ENCODE measurements at regions of chr6 and their contacts with region 1.

Region 1: DNA sequence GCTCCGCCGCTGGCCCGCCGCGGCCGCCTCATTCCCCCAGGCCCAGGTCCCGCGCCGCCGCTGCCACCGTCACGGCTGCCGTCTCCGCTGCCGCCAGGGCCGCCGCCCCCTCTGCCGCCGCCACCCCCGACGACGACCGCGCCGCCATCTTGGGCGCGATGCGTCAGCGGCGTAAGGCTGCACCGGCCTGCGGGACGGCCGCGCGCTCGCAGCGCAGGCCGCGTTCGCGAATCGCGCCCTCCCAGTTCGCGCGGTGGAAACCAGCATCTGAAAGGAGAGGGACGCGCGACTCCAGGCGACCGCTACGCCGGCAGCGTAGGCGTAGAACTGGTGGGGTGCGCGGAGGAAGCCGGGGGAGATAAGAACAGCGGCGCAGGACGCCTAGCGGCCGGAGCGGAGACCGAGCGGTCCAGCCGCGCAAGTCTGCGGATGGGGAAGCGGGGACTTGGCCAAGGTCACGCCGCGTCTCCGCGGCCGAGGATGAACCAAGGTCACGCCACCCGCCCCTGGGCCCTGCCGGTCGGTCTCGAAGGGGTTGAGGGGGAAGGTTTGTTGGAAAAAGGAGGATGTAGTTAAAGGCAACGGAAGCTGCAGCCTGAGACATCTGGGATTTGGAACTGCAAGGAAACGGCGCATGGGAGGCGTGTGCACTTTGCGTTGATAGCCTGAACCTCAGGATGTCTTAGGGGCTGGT is at the start of gene NUDT3:
- DNase-seq: peak; percentile 92 to 97 (median 93)
- H3K4me3 ChIP-seq: peak within 1 kb of the TSS; percentile 73 to 78
- H3K4me3 Mint-ChIP-seq: peak within 1 kb of the TSS in 7 of 8 donors; percentile 74 to 99 (median 95)
- H3K27ac ChIP-seq: peak within 1 kb of the TSS; percentile 89
- H3K27ac Mint-ChIP-seq: peak within 1 kb of the TSS in 6 of 7 donors; percentile 75 to 96 (median 95)
- H3K4me1 ChIP-seq: peaks cover 24% of the 10 kb centered on the region
- H3K4me1 Mint-ChIP-seq: peaks cover 13 to 27% (median 18%) of the 10 kb centered on the region in 4 donors
- H3K27me3 ChIP-seq: no peaks in the 10 kb centered on the region
- H3K27me3 Mint-ChIP-seq: no peaks in the 10 kb centered on the region
- total RNA-seq, gene NUDT3: 25.9 TPM

Region 2: DNA sequence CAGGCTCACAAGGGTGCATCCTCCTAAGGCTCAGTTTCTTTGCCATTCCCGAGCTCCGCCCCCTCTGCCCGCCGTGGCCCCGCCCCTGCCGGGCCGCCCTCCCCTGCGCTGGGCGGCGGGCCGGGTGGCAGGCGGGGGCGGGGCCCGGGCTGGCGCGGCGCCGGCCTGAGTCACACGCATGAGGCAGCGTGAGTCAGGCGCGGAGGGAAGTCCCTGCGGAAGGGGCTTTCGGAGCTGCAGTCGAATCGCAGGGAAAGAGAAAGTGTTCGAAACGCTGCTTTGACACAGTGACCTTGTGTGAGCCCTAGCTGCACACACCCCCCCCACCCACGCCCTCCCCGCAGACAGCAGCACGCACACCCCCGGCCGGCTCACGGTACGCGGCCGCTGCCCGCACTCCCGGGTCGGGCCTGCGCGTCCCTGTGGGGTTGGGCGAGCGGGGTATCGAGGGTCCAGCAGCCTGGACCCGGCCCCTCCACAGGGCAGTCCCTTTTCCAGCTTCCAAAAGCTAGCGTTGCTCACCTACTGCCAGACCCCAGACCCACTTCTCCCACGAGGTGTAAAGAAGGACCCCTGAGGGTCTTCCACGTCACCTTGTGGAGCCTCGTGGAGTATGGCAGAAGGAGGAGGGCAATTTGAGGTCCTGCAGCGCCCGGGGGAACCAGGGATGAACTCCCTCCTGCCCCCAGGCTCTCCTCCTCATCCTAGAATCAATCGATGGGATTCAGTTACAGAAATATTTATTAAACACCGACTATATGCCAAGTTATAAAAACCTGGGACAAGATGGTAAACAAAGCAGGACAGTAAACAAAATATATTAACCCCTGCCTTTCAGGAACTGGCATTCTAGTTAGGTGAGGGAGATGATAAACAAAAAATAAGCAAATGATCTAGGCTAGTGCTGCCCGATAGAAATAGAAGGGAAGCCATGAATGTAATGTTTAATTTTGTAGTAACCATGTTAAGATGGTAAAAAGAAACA is 168.4 kb before region 1 on chr6:
- CTCF ChIA-PET with region 1: interaction called, 3 read pairs
- POLR2A ChIA-PET with region 1: interaction called, 10 read pairs
- intact Hi-C with region 1: no loop called
- DNase-seq: peak; percentile 90 to 98 (median 94)
- H3K4me3 ChIP-seq: peak overlapping the region; percentile 77 to 86
- H3K4me3 Mint-ChIP-seq: peak overlapping the region; percentile 60 to 81 (median 74)
- H3K27ac ChIP-seq: peak overlapping the region; percentile 99
- H3K27ac Mint-ChIP-seq: peak overlapping the region; percentile 72 to 99 (median 96)
- H3K4me1 ChIP-seq: peaks cover 14% of the 10 kb centered on the region
- H3K4me1 Mint-ChIP-seq: peaks cover 4 to 13% (median 10%) of the 10 kb centered on the region in 4 donors
- H3K27me3 ChIP-seq: no peaks in the 10 kb centered on the region
- H3K27me3 Mint-ChIP-seq: no peaks in the 10 kb centered on the region

Region 3: DNA sequence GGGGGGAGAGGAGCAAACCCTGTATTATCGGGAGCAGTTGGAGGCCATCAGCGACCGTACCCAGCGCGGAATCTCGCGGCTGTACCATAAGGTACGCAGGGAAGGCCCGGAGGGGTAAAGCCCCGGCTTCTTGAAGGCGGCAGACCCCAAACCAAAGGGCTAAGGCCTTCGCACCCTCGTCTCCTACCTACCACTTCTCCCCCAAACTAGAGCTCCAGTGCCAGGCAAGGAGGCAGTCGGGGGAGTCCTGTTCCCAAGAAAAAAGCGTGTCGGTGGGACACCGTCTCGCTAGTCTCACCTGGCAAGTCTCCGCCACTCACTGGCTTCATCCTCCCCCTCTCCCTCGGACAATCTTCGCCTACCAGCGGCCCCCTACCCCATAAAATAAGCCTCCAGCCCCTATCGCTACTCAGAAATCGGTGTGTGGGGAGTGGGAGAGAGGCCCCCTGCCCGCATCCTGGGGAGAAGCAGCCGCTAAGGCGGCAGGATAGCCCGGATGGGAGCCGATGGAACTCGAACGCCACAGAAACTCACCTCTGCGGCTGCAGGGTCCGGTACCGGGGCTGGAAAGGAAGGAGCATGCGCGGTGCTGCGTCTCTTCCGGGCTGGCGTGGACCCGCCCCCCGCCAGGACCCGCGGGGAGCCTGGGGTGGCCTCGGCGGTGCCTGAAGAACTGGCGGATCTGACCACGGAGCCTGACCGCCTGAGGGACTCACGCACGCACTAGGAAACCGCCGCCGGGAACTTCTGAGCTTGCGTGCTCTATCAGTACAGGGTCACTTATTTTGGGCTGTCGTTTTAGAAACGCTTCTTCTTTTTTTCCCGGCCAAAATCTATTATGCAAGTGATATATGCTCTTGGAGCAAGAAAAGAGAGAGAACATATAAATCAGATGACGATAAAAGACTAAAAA is 33.1 kb after region 1 on chr6 and contains the start of gene RPS10:
- CTCF ChIA-PET with region 1: interaction called, 4 read pairs
- POLR2A ChIA-PET with region 1: interaction called, 15 read pairs
- intact Hi-C with region 1: loop called (anchors 2 kb)
- DNase-seq: peak; percentile 85 to 90 (median 87)
- H3K4me3 ChIP-seq: peak within 1 kb of the TSS; percentile 80 to 95
- H3K4me3 Mint-ChIP-seq: peak within 1 kb of the TSS; percentile 97 to 99 (median 98)
- H3K27ac ChIP-seq: peak within 1 kb of the TSS; percentile 94
- H3K27ac Mint-ChIP-seq: peak within 1 kb of the TSS; percentile 96 to 99 (median 97)
- H3K4me1 ChIP-seq: peaks cover 30% of the 10 kb centered on the region
- H3K4me1 Mint-ChIP-seq: peaks cover 16 to 42% (median 32%) of the 10 kb centered on the region in 4 donors
- H3K27me3 ChIP-seq: no peaks in the 10 kb centered on the region
- H3K27me3 Mint-ChIP-seq: no peaks in the 10 kb centered on the region
- total RNA-seq, gene RPS10: 2,689 to 2,757 TPM